ENCODE measurements at regions of chr20 and their contacts with region 1.

Region 1: GRCh38 chr20:19947611-19948264 is 69.4 kb upstream of the NAA20 start:
- DNase-seq: peak; percentile 28
- H3K4me3 Mint-ChIP-seq: no peak overlapping the region
- H3K27ac Mint-ChIP-seq: no peak overlapping the region
- H3K4me1 Mint-ChIP-seq: peaks cover 30% of the 10 kb centered on the region
- H3K27me3 Mint-ChIP-seq: peaks cover 2% of the 10 kb centered on the region

Region 2: DNA sequence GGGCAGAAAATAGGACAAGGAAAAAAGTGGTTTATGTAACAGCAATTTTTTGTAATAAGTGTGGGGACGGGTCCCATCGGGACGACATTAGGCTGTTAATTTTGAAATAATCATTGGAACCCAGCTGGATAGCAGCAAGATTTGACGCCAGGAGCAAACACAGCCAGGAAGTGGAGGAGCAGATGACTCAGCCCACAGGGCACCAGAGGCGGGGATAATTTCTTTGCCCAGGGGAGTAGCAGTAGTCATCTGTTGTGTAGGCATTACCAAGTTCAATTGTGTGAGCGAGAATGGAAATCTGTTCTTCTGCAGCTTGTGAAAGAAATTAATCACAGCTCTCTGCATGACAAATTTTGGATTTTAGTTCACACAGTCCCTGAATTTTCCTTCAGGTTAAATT is 212.3 kb before region 1 on chr20:
- CTCF ChIA-PET with region 1: no interaction called
- POLR2A ChIA-PET with region 1: no interaction called
- intact Hi-C with region 1: loop called (anchors 1 kb)
- DNase-seq: peak; percentile 70
- H3K4me3 Mint-ChIP-seq: no peak overlapping the region
- H3K27ac Mint-ChIP-seq: peak overlapping the region; percentile 7
- H3K4me1 Mint-ChIP-seq: peaks cover 19% of the 10 kb centered on the region
- H3K27me3 Mint-ChIP-seq: peaks cover 8% of the 10 kb centered on the region

Region 3: DNA sequence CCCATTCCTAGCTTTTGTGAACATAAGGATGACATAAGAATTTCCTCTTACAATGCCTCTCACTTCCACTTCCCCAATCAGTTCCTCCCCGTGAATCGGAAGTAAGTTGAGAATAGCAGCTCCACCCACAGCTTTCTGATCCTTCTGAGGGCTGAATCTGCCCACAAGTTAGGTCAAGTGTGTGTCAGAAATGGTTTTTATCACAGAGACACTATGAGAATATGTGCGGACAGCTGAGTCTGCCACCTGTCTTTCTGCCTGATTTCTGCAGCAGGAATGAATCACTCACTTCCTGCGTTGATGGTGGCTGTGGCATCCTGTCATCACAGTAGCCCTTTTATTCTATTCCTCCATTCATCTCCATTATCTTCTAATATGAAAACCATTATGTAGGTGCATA is 119.5 kb before region 1 on chr20:
- CTCF ChIA-PET with region 1: no interaction called
- POLR2A ChIA-PET with region 1: no interaction called
- intact Hi-C with region 1: loop called (anchors 2 kb)
- DNase-seq: peak; percentile 63
- H3K4me3 Mint-ChIP-seq: no peak overlapping the region
- H3K27ac Mint-ChIP-seq: peak overlapping the region; percentile 60
- H3K4me1 Mint-ChIP-seq: peaks cover 24% of the 10 kb centered on the region
- H3K27me3 Mint-ChIP-seq: peaks cover 5% of the 10 kb centered on the region

Region 4: GRCh38 chr20:19937218-19937617 is 10.5 kb before region 1 on chr20:
- CTCF ChIA-PET with region 1: no interaction called
- POLR2A ChIA-PET with region 1: interaction called, 3 read pairs
- intact Hi-C with region 1: loop called (anchors 1 kb)
- DNase-seq: peak; percentile 54
- H3K4me3 Mint-ChIP-seq: peak overlapping the region; percentile 13
- H3K27ac Mint-ChIP-seq: no peak overlapping the region
- H3K4me1 Mint-ChIP-seq: peaks cover 25% of the 10 kb centered on the region
- H3K27me3 Mint-ChIP-seq: peaks cover 14% of the 10 kb centered on the region

Region 5: DNA sequence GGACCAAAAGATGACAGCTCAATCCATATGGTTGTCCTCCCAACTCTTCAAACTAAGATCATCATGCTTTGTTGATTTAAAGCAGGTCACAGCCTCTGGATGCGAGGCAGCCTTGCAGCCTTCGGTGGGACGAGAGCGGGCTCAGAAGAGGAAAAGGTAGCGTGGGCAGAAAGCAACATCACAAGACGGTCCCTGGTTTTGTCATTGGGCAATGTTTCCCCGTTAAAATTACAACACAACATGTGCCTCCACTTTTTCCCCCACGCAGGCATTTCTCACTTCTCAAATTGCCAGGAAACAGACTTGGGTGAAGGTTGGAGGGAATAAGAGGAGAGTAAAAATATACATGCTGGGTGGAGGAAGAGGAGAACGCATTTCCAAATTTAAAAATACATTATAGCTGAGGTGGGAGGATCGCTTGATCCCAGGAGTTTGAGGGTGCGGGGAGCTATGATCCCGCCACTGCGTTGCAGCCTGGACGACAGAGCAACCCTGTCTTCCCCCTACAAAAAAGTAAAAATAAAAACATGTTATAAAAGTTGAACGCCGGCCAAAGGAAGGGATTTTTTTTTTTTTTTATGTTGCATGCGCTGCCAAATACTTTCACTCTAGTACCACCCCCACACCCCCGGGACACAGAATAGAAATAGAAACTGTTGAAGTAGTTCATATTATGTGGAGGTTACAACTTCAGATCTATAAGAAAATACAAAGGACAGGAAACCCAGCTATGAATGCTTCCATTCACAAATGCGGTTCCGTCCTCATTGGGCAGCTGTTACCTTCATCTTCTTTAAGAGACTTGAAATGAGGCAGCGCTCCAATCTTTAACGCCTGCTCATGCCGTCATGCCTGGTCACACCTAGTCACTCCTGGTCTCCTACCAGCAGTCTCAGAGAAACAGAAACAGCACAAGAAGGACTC is 55.6 kb after region 1 on chr20:
- CTCF ChIA-PET with region 1: no interaction called
- POLR2A ChIA-PET with region 1: no interaction called
- intact Hi-C with region 1: loop called (anchors 5 kb)
- DNase-seq: peak; percentile 60
- H3K4me3 Mint-ChIP-seq: peak overlapping the region; percentile 33
- H3K27ac Mint-ChIP-seq: no peak overlapping the region
- H3K4me1 Mint-ChIP-seq: peaks cover 12% of the 10 kb centered on the region
- H3K27me3 Mint-ChIP-seq: peaks cover 41% of the 10 kb centered on the region